ENCODE measurements at regions of chr11 and their contacts with region 1.

Region 1: DNA sequence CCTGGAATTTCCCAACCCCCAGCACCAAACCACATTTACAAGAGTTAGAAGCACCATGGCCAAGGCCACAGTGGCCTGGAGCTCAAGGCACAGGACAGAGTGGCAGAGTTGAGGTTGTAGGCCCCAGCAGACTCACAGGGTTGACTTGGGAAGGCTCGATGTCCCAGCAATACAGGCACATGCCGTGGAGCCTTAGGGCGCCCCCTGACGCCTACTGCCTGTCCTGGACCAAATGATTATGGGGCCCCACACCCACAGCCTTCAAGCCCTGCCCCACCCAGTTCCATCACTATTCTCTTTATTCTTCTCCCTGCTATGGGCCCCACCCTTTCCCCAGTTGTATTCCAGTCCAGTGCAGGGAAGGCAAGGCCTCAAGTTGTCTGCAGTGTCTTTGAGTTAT is at the start of gene CCDC179:
- DNase-seq: no peak
- H3K4me3 ChIP-seq: no peak within 1 kb of the TSS
- CTCF ChIP-seq: no peak

Region 2: GRCh38 chr11:22875869-22876473 is 15.7 kb after region 1 on chr11:
- CTCF ChIA-PET with region 1: interaction called, 13 read pairs
- POLR2A ChIA-PET with region 1: no interaction called
- DNase-seq: peak; percentile 58
- H3K4me3 ChIP-seq: no peak overlapping the region
- CTCF ChIP-seq: peak; percentile 50